ENCODE measurements at regions of chr5 and their contacts with region 1.

Region 1: GRCh38 chr5:158303275-158303674 is 444.3 kb upstream of the CLINT1 start:
- DNase-seq: no peak
- ATAC-seq: no peak
- H3K4me3 Mint-ChIP-seq: no peak overlapping the region
- H3K27ac Mint-ChIP-seq: no peak overlapping the region
- H3K4me1 Mint-ChIP-seq: no peaks in the 10 kb centered on the region
- H3K27me3 Mint-ChIP-seq: no peaks in the 10 kb centered on the region
- CTCF ChIP-seq: no peak

Region 2: DNA sequence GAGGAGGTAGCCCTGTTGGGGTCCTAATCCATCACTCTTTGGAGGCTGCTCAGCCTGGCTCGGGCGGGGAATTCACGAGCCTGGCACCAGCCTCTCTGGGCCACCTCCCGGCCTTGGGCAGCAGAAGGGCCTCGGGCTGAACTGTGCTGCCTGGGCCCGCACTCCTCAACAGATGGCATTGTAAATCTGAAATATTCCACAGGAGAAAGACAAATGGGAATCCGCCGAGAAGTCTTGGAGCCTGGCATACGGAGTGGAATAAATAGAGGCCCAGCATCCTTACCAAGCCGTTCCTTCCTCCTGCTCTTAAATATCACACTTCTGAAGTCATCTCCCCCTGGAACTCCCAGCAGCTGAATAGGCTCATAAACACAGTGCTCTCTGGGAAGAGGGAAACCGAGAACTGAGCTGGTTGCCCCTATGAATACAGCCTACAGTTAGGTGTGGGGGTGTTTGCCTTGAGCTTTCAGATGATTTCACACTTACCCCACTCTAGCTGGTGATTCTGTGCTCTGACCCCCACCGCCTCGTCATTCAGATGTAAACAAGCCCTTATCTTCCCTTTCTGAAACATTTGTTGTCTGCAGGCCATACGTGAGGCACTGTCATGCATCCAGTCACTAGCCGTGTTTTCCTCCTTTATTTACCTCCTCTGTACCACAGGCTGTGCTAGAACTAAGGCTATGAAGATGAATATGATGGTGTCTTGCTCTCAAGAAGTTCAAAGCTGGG is 10.6 kb after region 1 on chr5:
- CTCF ChIA-PET with region 1: no interaction called
- POLR2A ChIA-PET with region 1: no interaction called
- intact Hi-C with region 1: loop called (anchors 2 kb)
- DNase-seq: no peak
- ATAC-seq: no peak
- H3K4me3 Mint-ChIP-seq: no peak overlapping the region
- H3K27ac Mint-ChIP-seq: no peak overlapping the region
- H3K4me1 Mint-ChIP-seq: no peaks in the 10 kb centered on the region
- H3K27me3 Mint-ChIP-seq: peaks cover 1% of the 10 kb centered on the region
- CTCF ChIP-seq: no peak

Region 3: DNA sequence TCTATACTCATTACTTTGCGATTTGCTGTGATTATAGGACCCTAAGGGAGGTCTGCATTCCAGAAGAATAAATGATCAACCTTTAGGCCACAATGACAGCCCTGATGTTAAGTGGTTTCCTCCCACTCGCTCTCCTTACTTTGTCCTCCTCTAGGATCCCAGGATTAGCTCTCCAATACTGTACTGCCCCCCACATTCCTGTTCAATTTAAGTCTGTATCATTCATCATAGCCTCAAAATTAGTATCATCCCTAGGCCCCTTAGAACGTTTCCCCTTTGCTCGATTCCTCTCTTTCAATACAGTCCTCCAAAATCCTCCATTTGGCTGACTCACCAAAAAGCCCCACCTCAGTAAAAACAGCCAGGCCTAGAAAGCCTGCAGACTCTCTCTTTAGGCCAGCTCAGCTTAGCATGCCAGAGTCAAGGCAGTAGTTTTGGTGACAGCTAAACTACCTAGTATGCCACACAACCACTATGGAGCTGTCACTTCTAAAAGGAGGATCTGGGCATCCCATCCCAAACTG is 881.6 kb after region 1 on chr5:
- CTCF ChIA-PET with region 1: no interaction called
- POLR2A ChIA-PET with region 1: no interaction called
- intact Hi-C with region 1: no loop called
- DNase-seq: no peak
- ATAC-seq: peak; percentile 65
- H3K4me3 Mint-ChIP-seq: peak overlapping the region; percentile 53
- H3K27ac Mint-ChIP-seq: peak overlapping the region; percentile 86
- H3K4me1 Mint-ChIP-seq: peaks cover 75% of the 10 kb centered on the region
- H3K27me3 Mint-ChIP-seq: no peaks in the 10 kb centered on the region
- CTCF ChIP-seq: no peak